ENCODE measurements at regions of chr1 and their contacts with region 1.

Region 1: DNA sequence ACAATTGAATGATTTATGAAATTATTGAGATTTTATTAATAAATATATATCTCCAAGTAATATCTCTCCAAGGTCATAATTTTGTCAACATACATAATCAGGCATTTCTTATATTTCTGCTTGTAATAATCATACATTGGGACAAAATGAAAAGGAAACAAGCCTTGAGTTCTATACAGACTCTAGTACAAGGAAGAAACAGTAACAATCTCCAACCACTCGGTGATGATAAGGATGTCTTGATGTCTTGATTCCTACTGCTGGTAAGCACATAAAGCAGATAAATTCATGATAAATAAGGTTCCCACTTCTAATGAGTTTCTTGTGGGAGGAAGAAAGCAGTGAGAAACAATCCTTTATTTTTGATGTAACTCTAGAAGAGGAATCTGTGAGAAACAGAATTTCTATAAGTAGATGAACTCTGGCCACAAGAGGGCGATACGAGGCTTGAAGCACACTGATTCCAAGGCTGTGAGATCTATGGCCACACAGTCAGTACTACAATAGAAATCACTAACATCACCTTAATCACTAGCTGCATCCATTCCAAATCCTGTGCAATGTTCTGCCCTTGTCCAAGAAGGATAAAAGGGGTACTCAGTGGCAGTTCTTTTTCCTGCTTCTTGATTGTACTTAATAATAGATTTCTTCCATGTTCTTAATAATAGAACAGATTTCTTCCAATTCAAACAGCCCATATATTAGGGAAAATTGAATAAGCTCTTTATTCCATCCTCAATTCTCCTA is 41.4 kb upstream of the LRRC8B start:
- DNase-seq: peak; percentile 57 to 88 (median 72)
- ATAC-seq: peak; percentile 95
- H3K4me3 ChIP-seq: no peak overlapping the region
- H3K4me3 Mint-ChIP-seq: no peak overlapping the region
- H3K27ac ChIP-seq: no peak overlapping the region
- H3K27ac Mint-ChIP-seq: no peak overlapping the region
- H3K4me1 ChIP-seq: no peaks in the 10 kb centered on the region
- H3K4me1 Mint-ChIP-seq: peaks cover 14% of the 10 kb centered on the region
- H3K27me3 ChIP-seq: no peaks in the 10 kb centered on the region
- H3K27me3 Mint-ChIP-seq: no peaks in the 10 kb centered on the region
- CTCF ChIP-seq: peak; percentile 88

Region 2: DNA sequence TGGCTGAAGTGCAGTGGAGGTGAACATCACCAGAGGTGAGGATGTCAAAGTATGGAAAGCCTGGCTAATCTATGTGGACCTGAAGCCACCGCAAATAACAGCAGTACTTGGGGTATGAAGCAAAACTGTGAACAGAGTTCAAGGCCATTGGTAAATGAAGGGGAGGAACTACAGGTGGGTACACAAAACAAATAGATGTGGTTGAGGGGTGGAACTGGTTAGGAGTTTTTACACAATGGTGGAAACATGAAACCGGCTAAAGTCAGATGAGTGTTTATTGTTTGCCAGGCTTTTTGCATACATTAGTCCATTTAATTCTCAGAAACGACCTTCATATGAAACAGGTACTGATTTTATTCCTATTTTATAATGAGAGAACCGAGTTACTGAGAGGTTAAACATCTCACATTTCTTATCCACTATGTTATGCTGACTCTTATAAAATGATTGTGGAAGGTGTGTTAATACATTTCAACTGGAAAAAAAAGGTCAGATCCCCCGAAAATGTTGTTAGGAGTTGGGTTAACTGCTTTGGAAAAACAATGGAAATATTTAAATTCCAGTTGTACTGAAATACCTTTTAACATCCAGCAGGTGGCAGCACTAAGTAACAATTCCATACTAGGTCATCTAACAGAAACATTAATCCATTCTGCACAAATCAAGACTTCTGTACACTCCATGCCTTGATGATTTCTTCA is 547.5 kb before region 1 on chr1:
- CTCF ChIA-PET with region 1: no interaction called
- POLR2A ChIA-PET with region 1: no interaction called
- intact Hi-C with region 1: no loop called
- DNase-seq: peak in 4 of 14 experiments; percentile 25 to 68 (median 54)
- ATAC-seq: peak; percentile 66
- H3K4me3 ChIP-seq: no peak overlapping the region
- H3K4me3 Mint-ChIP-seq: no peak overlapping the region
- H3K27ac ChIP-seq: no peak overlapping the region
- H3K27ac Mint-ChIP-seq: no peak overlapping the region
- H3K4me1 ChIP-seq: no peaks in the 10 kb centered on the region
- H3K4me1 Mint-ChIP-seq: no peaks in the 10 kb centered on the region
- H3K27me3 ChIP-seq: no peaks in the 10 kb centered on the region
- H3K27me3 Mint-ChIP-seq: no peaks in the 10 kb centered on the region
- CTCF ChIP-seq: peak; percentile 77

Region 3: GRCh38 chr1:89598450-89599331 is 115.5 kb after region 1 on chr1:
- CTCF ChIA-PET with region 1: interaction called, 3 read pairs
- POLR2A ChIA-PET with region 1: no interaction called
- intact Hi-C with region 1: loop called in 1 of 2 experiments (anchors 5 kb)
- DNase-seq: peak in 3 of 14 experiments; percentile 51 to 68 (median 67)
- ATAC-seq: peak; percentile 70
- H3K4me3 ChIP-seq: no peak overlapping the region
- H3K4me3 Mint-ChIP-seq: peak overlapping the region; percentile 7
- H3K27ac ChIP-seq: no peak overlapping the region
- H3K27ac Mint-ChIP-seq: peak overlapping the region; percentile 21
- H3K4me1 ChIP-seq: peaks cover 27% of the 10 kb centered on the region
- H3K4me1 Mint-ChIP-seq: peaks cover 90% of the 10 kb centered on the region
- H3K27me3 ChIP-seq: no peaks in the 10 kb centered on the region
- H3K27me3 Mint-ChIP-seq: no peaks in the 10 kb centered on the region
- CTCF ChIP-seq: peak; percentile 75

Region 4: GRCh38 chr1:89622895-89623294 is 139.7 kb after region 1 on chr1:
- CTCF ChIA-PET with region 1: interaction called, 7 read pairs
- POLR2A ChIA-PET with region 1: interaction called, 3 read pairs
- intact Hi-C with region 1: loop called (anchors 2 kb)
- DNase-seq: peak in 4 of 14 experiments; percentile 25 to 78 (median 69)
- ATAC-seq: peak; percentile 65
- H3K4me3 ChIP-seq: no peak overlapping the region
- H3K4me3 Mint-ChIP-seq: peak overlapping the region; percentile 63
- H3K27ac ChIP-seq: no peak overlapping the region
- H3K27ac Mint-ChIP-seq: peak overlapping the region; percentile 72
- H3K4me1 ChIP-seq: peaks cover 12% of the 10 kb centered on the region
- H3K4me1 Mint-ChIP-seq: peaks cover 62% of the 10 kb centered on the region
- H3K27me3 ChIP-seq: no peaks in the 10 kb centered on the region
- H3K27me3 Mint-ChIP-seq: no peaks in the 10 kb centered on the region
- CTCF ChIP-seq: no peak

Region 5: GRCh38 chr1:89987170-89987819 is 504.1 kb after region 1 on chr1:
- CTCF ChIA-PET with region 1: no interaction called
- POLR2A ChIA-PET with region 1: interaction called, 3 read pairs
- intact Hi-C with region 1: loop called (anchors 2 to 5 kb)
- DNase-seq: peak in 12 of 14 experiments; percentile 19 to 83 (median 45)
- ATAC-seq: peak; percentile 93
- H3K4me3 ChIP-seq: no peak overlapping the region
- H3K4me3 Mint-ChIP-seq: no peak overlapping the region
- H3K27ac ChIP-seq: no peak overlapping the region
- H3K27ac Mint-ChIP-seq: no peak overlapping the region
- H3K4me1 ChIP-seq: no peaks in the 10 kb centered on the region
- H3K4me1 Mint-ChIP-seq: no peaks in the 10 kb centered on the region
- H3K27me3 ChIP-seq: no peaks in the 10 kb centered on the region
- H3K27me3 Mint-ChIP-seq: no peaks in the 10 kb centered on the region
- CTCF ChIP-seq: peak; percentile 89